GM12878 (cell line): ENCODE measurements at regions of chr14 and their contacts with region 1.

Region 1: GRCh38 chr14:75560962-75561432 is 17.4 kb upstream of the FLVCR2 start:
- DNase-seq: no peak
- ATAC-seq: peak; percentile 77
- H3K4me3 ChIP-seq: no peak overlapping the region
- H3K27ac ChIP-seq: no peak overlapping the region
- H3K4me1 ChIP-seq: peaks cover 27% of the 10 kb centered on the region
- H3K27me3 ChIP-seq: no peaks in the 10 kb centered on the region
- CTCF ChIP-seq: peak; percentile 84 to 91 (median 86)
- EP300 ChIP-seq: no peak
- POLR2A ChIP-seq: no peak
- RAD21 ChIP-seq: peak; percentile 82

Region 2: DNA sequence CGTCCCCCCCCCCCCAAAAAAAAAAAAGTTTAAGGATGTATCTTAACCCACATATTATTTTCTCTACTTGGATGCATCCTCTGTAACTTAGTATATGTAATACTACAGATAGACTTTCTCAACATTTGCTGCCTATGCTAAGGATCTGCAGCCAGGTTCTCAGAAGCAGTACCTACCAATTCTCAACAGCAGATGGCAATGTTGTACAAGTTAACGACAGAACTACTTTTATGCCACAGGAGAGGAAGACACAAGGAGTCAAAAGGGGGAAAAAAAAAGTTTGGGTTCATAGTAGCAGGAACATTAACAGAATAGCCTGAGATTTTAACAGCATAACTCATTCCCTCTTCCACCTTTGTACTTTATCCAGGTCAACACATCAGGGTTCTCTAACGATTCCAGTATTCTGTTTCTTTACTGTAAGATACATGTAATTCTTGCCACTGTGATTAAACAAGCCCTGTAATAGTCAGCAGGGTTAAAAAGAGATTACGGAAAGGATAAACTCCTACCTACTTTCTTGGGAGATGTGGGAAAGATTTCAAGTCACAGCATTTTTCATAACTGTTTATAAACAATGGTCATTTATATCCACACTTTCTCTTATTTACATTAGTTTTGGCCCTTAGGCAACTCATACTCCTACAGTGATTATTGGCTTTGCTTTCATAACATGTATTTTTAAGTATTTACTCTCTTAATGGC is 428.5 kb before region 1 on chr14:
- CTCF ChIA-PET with region 1: no interaction called
- POLR2A ChIA-PET with region 1: no interaction called
- RAD21 ChIA-PET with region 1: no interaction called
- SMC1A ChIA-PET with region 1: no interaction called
- in situ Hi-C with region 1: loop called (anchors 5 kb)
- intact Hi-C with region 1: loop called (anchors 10 kb)
- DNase-seq: peak; percentile 66
- ATAC-seq: peak; percentile 91
- H3K4me3 ChIP-seq: no peak overlapping the region
- H3K27ac ChIP-seq: no peak overlapping the region
- H3K4me1 ChIP-seq: peaks cover 11% of the 10 kb centered on the region
- H3K27me3 ChIP-seq: no peaks in the 10 kb centered on the region
- CTCF ChIP-seq: peak; percentile 67 to 70 (median 68)
- EP300 ChIP-seq: no peak
- POLR2A ChIP-seq: no peak
- RAD21 ChIP-seq: peak; percentile 94

Region 3: GRCh38 chr14:75506930-75507329 is 54.1 kb before region 1 on chr14:
- CTCF ChIA-PET with region 1: interaction called, 481 read pairs
- POLR2A ChIA-PET with region 1: no interaction called
- RAD21 ChIA-PET with region 1: interaction called, 5 read pairs
- SMC1A ChIA-PET with region 1: interaction called, 5 read pairs
- in situ Hi-C with region 1: no loop called
- intact Hi-C with region 1: no loop called
- DNase-seq: no peak
- ATAC-seq: no peak
- H3K4me3 ChIP-seq: no peak overlapping the region
- H3K27ac ChIP-seq: no peak overlapping the region
- H3K4me1 ChIP-seq: peaks cover 6% of the 10 kb centered on the region; the same call in 1 of the 2 replicates
- H3K27me3 ChIP-seq: no peaks in the 10 kb centered on the region
- CTCF ChIP-seq: no peak
- EP300 ChIP-seq: no peak
- POLR2A ChIP-seq: no peak
- RAD21 ChIP-seq: no peak

Region 4: GRCh38 chr14:75531660-75532317 is 29.2 kb before region 1 on chr14:
- CTCF ChIA-PET with region 1: interaction called, 481 read pairs
- POLR2A ChIA-PET with region 1: interaction called, 3 read pairs
- RAD21 ChIA-PET with region 1: interaction called, 27 read pairs
- SMC1A ChIA-PET with region 1: interaction called, 257 read pairs
- in situ Hi-C with region 1: no loop called
- intact Hi-C with region 1: no loop called
- DNase-seq: no peak
- ATAC-seq: no peak
- H3K4me3 ChIP-seq: no peak overlapping the region
- H3K27ac ChIP-seq: no peak overlapping the region
- H3K4me1 ChIP-seq: peaks cover 19% of the 10 kb centered on the region
- H3K27me3 ChIP-seq: no peaks in the 10 kb centered on the region
- CTCF ChIP-seq: no peak
- EP300 ChIP-seq: no peak
- POLR2A ChIP-seq: no peak
- RAD21 ChIP-seq: no peak

Region 5: GRCh38 chr14:75549169-75549568 is 11.8 kb before region 1 on chr14:
- CTCF ChIA-PET with region 1: interaction called, 84 read pairs
- POLR2A ChIA-PET with region 1: interaction called, 5 read pairs
- RAD21 ChIA-PET with region 1: interaction called, 32 read pairs
- SMC1A ChIA-PET with region 1: interaction called, 33 read pairs
- in situ Hi-C with region 1: no loop called
- intact Hi-C with region 1: no loop called
- DNase-seq: peak; percentile 79
- ATAC-seq: peak; percentile 87
- H3K4me3 ChIP-seq: no peak overlapping the region; the same call in 1 of the 2 replicates
- H3K27ac ChIP-seq: peak overlapping the region; percentile 53
- H3K4me1 ChIP-seq: peaks cover 23% of the 10 kb centered on the region
- H3K27me3 ChIP-seq: no peaks in the 10 kb centered on the region
- CTCF ChIP-seq: no peak
- EP300 ChIP-seq: peak in 1 of 2 experiments; percentile 49; a peak in 1 of 4 replicates
- POLR2A ChIP-seq: no peak
- RAD21 ChIP-seq: peak; percentile 7; the same call in 1 of the 2 replicates

Region 6: GRCh38 chr14:75654127-75654732 is 93.2 kb after region 1 on chr14:
- CTCF ChIA-PET with region 1: interaction called, 53 read pairs
- POLR2A ChIA-PET with region 1: no interaction called
- RAD21 ChIA-PET with region 1: interaction called, 11 read pairs
- SMC1A ChIA-PET with region 1: interaction called, 12 read pairs
- in situ Hi-C with region 1: no loop called
- intact Hi-C with region 1: no loop called
- DNase-seq: peak; percentile 38
- ATAC-seq: peak; percentile 98
- H3K4me3 ChIP-seq: no peak overlapping the region
- H3K27ac ChIP-seq: no peak overlapping the region
- H3K4me1 ChIP-seq: no peaks in the 10 kb centered on the region
- H3K27me3 ChIP-seq: no peaks in the 10 kb centered on the region
- CTCF ChIP-seq: peak; percentile 97 to 98 (median 97)
- EP300 ChIP-seq: no peak
- POLR2A ChIP-seq: no peak
- RAD21 ChIP-seq: peak; percentile 97

Region 7: DNA sequence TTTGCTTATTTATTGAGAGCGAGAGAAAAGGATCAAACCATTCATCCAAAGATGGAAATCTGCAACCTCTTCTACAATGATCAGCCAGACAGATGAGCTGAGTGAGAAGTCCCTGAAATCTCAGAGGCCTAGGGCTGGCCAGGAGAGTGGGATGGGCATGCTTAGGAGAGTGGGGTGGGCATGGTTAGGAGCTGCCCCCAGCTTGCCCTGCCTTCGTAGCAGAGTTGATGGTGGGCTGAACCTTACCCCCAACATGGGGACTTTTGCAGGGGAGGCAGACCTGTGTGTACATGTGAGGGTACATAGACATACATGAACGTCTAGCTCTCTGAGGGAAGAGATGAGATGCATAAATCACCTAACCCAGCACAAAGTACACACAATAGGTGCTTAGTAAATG is 719.2 kb after region 1 on chr14:
- CTCF ChIA-PET with region 1: no interaction called
- POLR2A ChIA-PET with region 1: no interaction called
- RAD21 ChIA-PET with region 1: no interaction called
- SMC1A ChIA-PET with region 1: no interaction called
- in situ Hi-C with region 1: no loop called
- intact Hi-C with region 1: no loop called
- DNase-seq: no peak
- ATAC-seq: no peak
- H3K4me3 ChIP-seq: no peak overlapping the region
- H3K27ac ChIP-seq: no peak overlapping the region
- H3K4me1 ChIP-seq: no peaks in the 10 kb centered on the region
- H3K27me3 ChIP-seq: no peaks in the 10 kb centered on the region
- CTCF ChIP-seq: no peak
- EP300 ChIP-seq: no peak
- POLR2A ChIP-seq: no peak
- RAD21 ChIP-seq: no peak